AG04450 (cell line): ENCODE measurements at regions of chr3 and their contacts with region 1.

Region 1: GRCh38 chr3:37967260-37967881 is 23.2 kb upstream of the VILL start:
- DNase-seq: peak; percentile 46
- H3K4me3 ChIP-seq: no peak overlapping the region
- H3K27ac ChIP-seq: no peak overlapping the region
- H3K27me3 ChIP-seq: no peaks in the 10 kb centered on the region
- CTCF ChIP-seq: peak; percentile 92

Region 2: GRCh38 chr3:37855363-37855970 is 111.9 kb before region 1 on chr3:
- CTCF ChIA-PET with region 1: interaction called, 241 read pairs
- POLR2A ChIA-PET with region 1: interaction called, 6 read pairs
- DNase-seq: no peak
- H3K4me3 ChIP-seq: no peak overlapping the region
- H3K27ac ChIP-seq: no peak overlapping the region
- H3K27me3 ChIP-seq: no peaks in the 10 kb centered on the region
- CTCF ChIP-seq: peak; percentile 88

Region 3: DNA sequence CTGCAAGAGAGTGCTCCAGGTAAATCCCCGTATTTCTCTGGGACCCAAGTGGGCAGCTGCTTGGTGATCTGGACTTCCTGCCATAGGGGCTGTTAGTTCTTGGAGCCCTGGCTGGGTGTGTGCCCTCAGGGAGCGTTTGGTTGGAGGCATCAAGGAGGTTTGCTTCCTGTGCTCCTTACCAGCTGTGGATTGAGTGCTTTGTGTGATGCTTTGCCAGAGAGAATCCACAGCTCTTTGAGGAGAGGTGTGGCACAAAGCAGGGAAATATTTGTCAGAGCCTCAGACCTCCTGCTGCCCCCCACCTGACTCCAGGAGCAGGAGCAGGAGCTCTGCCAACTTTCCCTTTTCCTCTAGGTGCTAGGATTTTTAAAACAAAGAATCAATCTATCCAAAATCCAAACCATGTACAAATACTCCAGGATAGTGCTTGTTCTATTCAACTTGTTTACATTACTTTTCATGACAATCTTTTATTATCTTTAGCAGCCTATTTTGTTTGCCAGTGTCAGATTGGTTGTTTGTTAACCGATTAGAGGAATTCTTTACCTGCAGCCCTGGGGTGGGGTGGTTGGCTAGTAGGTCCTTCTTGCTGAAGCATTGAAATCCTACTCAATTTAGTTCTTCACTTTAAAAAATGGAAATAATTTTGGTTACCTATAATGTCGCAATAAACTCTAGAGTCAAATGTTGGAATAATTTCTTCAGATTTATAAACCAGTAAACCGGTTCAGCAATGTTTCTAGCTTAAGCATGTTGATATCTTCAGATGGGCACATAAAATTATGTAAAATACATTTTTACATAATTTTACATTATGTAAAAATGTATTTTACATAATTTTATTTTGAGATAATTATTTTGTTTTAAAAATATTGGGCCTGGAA is 103.2 kb before region 1 on chr3:
- CTCF ChIA-PET with region 1: interaction called, 241 read pairs
- POLR2A ChIA-PET with region 1: interaction called, 3 read pairs
- DNase-seq: no peak
- H3K4me3 ChIP-seq: peak overlapping the region; percentile 32
- H3K27ac ChIP-seq: no peak overlapping the region
- H3K27me3 ChIP-seq: no peaks in the 10 kb centered on the region
- CTCF ChIP-seq: no peak

Region 4: GRCh38 chr3:37945807-37946530 is 21.4 kb before region 1 on chr3:
- CTCF ChIA-PET with region 1: interaction called, 20 read pairs
- POLR2A ChIA-PET with region 1: interaction called, 3 read pairs
- DNase-seq: peak; percentile 33
- H3K4me3 ChIP-seq: no peak overlapping the region
- H3K27ac ChIP-seq: no peak overlapping the region
- H3K27me3 ChIP-seq: no peaks in the 10 kb centered on the region
- CTCF ChIP-seq: no peak

Region 5: GRCh38 chr3:37956723-37957528 is 10.4 kb before region 1 on chr3:
- CTCF ChIA-PET with region 1: interaction called, 30 read pairs
- POLR2A ChIA-PET with region 1: interaction called, 3 read pairs
- DNase-seq: no peak
- H3K4me3 ChIP-seq: no peak overlapping the region
- H3K27ac ChIP-seq: no peak overlapping the region
- H3K27me3 ChIP-seq: no peaks in the 10 kb centered on the region
- CTCF ChIP-seq: no peak

Region 6: GRCh38 chr3:37979541-37980461 is 12.4 kb after region 1 on chr3:
- CTCF ChIA-PET with region 1: interaction called, 20 read pairs
- POLR2A ChIA-PET with region 1: no interaction called
- DNase-seq: no peak
- H3K4me3 ChIP-seq: no peak overlapping the region
- H3K27ac ChIP-seq: no peak overlapping the region
- H3K27me3 ChIP-seq: no peaks in the 10 kb centered on the region
- CTCF ChIP-seq: no peak

Region 7: DNA sequence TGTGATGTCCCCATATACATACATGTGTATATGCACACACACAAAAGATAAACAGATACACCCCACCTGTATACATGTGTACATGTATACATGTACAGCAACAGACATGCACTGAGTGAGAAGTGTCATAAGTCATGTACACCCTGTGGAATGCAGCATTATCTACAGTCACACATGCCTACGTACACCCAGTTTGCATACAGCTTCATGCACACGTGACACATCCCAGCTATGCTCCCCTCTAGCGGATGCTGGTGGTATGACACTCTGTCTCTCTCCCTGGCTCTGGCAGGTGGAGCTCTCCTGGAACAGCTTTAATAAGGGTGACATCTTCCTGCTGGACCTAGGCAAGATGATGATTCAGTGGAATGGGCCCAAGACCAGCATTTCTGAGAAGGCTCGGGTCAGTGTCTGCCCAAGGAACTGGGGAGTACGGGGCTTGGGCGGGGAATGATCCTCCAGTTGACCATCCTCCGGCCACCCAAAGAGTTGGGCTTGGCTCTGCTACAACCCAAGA is 29.5 kb after region 1 on chr3:
- CTCF ChIA-PET with region 1: interaction called, 10 read pairs
- POLR2A ChIA-PET with region 1: no interaction called
- DNase-seq: peak; percentile 55
- H3K4me3 ChIP-seq: no peak overlapping the region
- H3K27ac ChIP-seq: no peak overlapping the region
- H3K27me3 ChIP-seq: peaks cover 1% of the 10 kb centered on the region
- CTCF ChIP-seq: peak; percentile 87

Region 8: DNA sequence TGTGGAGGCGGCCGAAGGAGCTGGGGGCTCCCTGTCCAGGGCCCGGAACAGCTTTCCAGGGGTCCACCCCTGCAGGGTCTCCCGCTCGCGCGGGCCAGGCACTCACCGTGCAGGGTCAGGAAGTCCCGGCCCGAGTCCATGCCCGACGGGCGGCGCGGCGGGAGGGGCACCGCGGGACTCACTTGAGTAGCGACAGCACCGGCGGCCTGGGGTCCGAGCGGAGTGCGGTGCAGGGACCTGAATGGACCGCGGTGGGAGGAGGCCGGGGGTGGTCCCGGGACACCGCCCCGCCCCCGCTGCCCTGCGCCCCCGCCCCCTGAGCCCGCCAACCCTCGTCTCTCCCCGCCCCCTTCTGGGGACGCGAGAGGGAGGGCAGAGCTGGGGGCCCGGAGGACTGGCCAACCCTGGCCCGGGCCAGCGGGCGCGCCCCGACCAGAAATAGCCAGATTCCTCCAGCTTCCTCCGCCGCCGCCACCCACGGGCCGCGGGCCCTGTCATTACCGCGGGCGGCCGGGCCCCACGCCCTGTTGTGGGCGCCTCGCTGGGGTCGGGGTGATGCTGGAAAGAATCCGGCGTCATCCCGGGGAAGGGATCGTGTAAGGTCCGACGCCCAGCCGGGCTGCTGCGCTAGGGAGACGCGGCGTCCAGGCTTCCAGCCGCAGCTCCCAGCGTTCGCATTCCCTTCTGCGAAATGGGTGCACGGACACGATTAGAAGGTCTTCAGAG is 62.2 kb after region 1 on chr3 and contains the start of gene PLCD1:
- CTCF ChIA-PET with region 1: no interaction called
- POLR2A ChIA-PET with region 1: no interaction called
- DNase-seq: no peak
- H3K4me3 ChIP-seq: peak within 1 kb of the TSS; percentile 64
- H3K27ac ChIP-seq: no peak within 1 kb of the TSS
- H3K27me3 ChIP-seq: no peaks in the 10 kb centered on the region
- CTCF ChIP-seq: no peak
- polyA plus RNA-seq, gene PLCD1: 14.4 and 17.0 TPM in 2 replicates

Region 9: DNA sequence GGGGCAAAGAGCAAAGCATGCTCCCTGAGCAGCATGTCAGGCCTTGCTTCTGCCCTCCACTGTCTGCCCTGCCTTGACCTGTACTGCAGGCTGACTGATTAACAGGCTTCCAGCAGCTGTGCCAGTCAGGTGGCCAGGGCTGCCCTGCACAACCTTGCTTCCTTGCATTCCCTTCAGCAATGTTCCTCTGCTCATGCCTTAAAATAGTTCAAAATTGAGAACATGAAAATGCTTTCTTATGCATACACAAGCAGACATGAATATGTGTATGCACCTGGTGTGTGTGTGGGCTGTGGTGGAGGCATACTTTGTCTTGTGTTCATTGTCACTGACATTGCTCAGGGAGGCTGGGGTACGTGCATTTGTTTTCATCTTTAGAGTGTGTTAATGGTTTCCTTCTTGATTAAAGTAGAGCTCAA is 297.0 kb after region 1 on chr3:
- CTCF ChIA-PET with region 1: no interaction called
- POLR2A ChIA-PET with region 1: no interaction called
- DNase-seq: no peak
- H3K4me3 ChIP-seq: no peak overlapping the region
- H3K27ac ChIP-seq: no peak overlapping the region
- H3K27me3 ChIP-seq: no peaks in the 10 kb centered on the region
- CTCF ChIP-seq: no peak